ENCODE measurements at regions of chr9 and their contacts with region 1.

Region 1: DNA sequence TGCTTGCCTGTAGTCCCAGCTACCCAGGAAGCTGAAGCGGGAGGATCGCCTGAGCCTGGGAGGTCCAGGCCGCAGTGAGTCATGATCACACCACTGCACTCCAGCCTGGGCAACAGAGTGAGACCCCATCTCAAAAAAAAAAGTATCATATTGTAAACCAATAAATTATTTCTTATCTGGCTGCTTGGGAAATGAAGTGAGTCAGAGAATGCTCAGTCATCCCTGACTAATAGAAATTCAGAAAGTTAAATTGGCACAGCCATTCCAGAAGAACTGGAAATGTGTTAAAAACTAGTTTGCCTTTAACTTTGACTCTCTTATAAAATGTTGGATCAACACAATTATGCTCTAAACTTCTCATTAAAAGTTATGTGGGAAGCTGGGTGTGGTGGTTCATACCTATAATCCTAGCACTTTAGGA is 9.8 kb upstream of the GNE start:
- DNase-seq: peak; percentile 71
- H3K4me3 ChIP-seq: no peak overlapping the region
- H3K27ac ChIP-seq: peak overlapping the region; percentile 19
- H3K4me1 ChIP-seq: peaks cover 6% of the 10 kb centered on the region
- H3K27me3 ChIP-seq: no peaks in the 10 kb centered on the region
- CTCF ChIP-seq: no peak

Region 2: GRCh38 chr9:36218411-36218901 is 49.6 kb before region 1 on chr9:
- CTCF ChIA-PET with region 1: no interaction called
- dilution Hi-C with region 1: loop called (anchors 5 kb)
- in situ Hi-C with region 1: no loop called
- intact Hi-C with region 1: no loop called
- DNase-seq: no peak
- H3K4me3 ChIP-seq: no peak overlapping the region
- H3K27ac ChIP-seq: no peak overlapping the region
- H3K4me1 ChIP-seq: no peaks in the 10 kb centered on the region
- H3K27me3 ChIP-seq: no peaks in the 10 kb centered on the region
- CTCF ChIP-seq: no peak

Measured in mammary epithelial cell (primary cell).